ENCODE measurements at regions of chr12 and their contacts with region 1.

Region 1: DNA sequence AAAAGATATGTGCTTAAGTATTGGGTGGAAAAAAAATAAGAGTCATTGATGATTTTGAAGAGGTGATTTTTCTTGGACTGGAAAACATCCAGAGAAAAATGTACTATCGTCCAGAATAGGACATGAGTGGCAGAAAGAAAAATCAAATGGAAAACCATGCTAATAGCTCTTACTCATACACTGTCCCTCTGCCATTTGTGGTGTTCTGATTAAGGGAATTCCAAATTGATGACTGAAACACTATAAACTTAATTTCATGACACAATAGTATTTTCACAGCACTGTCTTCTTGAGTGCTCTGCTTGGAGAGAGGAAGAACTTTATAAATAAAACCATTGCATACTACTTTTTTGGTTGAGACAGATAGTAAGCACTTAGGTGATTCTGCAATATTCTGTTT is 72.4 kb downstream of the USP15 start:
- DNase-seq: no peak
- ATAC-seq: no peak
- H3K4me3 ChIP-seq: no peak overlapping the region
- H3K27ac ChIP-seq: no peak overlapping the region
- H3K4me1 ChIP-seq: peaks cover 2 to 5% of the 10 kb centered on the region in 2 donors
- H3K27me3 ChIP-seq: no peaks in the 10 kb centered on the region

Region 2: DNA sequence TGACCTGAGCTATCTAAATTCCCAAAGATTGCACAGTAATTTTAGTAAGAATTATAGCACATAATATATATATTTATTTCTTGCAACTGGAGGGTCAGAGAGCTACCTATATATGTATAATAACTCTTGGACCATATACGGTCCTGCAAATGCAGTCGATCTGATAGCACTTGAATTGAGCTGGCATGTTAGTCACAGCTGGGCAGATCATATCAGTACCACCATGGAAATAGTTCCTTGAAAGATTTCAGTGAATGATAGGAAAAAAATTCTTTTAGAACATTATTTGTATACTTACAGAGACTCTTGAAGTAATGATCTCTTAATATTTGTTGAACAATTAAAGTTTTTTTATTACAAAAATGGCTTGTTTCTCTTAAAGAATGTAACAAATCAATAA is 39.5 kb after region 1 on chr12:
- intact Hi-C with region 1: loop called in 1 of 2 experiments (anchors 5 kb)
- DNase-seq: no peak
- ATAC-seq: no peak
- H3K4me3 ChIP-seq: no peak overlapping the region
- H3K27ac ChIP-seq: no peak overlapping the region
- H3K4me1 ChIP-seq: no peaks in the 10 kb centered on the region
- H3K27me3 ChIP-seq: no peaks in the 10 kb centered on the region

Measured in aorta (tissue), 5 donors.